Mammary epithelial cell (primary cell): ENCODE measurements at regions of chr14 and their contacts with region 1.

Region 1: GRCh38 chr14:23301288-23301968 is 1.2 kb downstream of the PPP1R3E start:
- DNase-seq: peak; percentile 99
- H3K4me3 ChIP-seq: peak overlapping the region; percentile 61 to 76 (median 73)
- H3K27ac ChIP-seq: peak overlapping the region; percentile 79
- H3K4me1 ChIP-seq: peaks cover 41% of the 10 kb centered on the region
- H3K27me3 ChIP-seq: no peaks in the 10 kb centered on the region
- CTCF ChIP-seq: peak; percentile 38 to 74

Region 2: DNA sequence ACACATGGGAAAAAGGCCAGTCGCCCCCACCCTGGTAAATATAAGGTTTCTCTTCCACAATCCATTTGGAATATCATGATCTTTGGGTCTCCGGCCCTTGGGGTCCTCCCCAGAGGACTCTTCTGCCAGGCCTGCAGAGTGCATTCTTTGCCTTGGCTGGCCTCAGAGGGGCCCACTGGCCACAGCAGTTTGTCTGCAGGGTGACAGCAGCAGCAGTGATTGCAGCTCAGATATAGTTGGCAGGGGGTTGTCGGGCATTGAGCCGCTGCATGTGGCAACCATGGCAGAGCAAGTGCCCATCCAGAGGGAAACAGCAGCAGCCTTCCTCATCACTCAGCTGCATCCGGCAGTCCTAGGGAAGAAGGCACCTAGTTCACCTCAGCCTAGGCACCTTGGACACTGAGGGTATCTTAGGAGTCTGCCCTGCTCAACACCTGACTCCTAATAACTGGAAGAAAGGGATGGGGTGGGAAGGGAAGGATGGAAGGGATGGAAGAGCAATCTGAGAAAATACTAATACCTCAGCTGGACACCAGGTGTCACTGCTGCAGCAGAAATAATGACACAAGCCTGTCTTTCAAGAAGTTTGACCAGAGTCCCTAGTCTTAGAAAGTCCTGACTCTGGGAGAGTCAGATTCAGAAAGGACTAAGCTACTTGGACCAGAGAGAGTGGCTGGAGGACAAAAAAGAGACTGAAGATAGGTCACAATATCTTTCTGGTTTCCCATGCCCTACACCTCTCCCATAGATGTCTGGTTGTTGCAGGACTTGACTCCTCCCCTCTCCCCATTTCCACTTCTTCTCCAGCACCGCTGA is 328.0 kb before region 1 on chr14:
- CTCF ChIA-PET with region 1: no interaction called
- dilution Hi-C with region 1: loop called (anchors 10 kb)
- in situ Hi-C with region 1: no loop called
- intact Hi-C with region 1: loop called (anchors 10 kb)
- DNase-seq: peak; percentile 57
- H3K4me3 ChIP-seq: no peak overlapping the region
- H3K27ac ChIP-seq: no peak overlapping the region
- H3K4me1 ChIP-seq: peaks cover 40% of the 10 kb centered on the region
- H3K27me3 ChIP-seq: no peaks in the 10 kb centered on the region
- CTCF ChIP-seq: peak; percentile 51 to 64

Region 3: GRCh38 chr14:23068476-23069412 is 232.7 kb before region 1 on chr14:
- CTCF ChIA-PET with region 1: no interaction called
- dilution Hi-C with region 1: no loop called
- in situ Hi-C with region 1: no loop called
- intact Hi-C with region 1: loop called (anchors 5 kb)
- DNase-seq: peak; percentile 83
- H3K4me3 ChIP-seq: no peak overlapping the region
- H3K27ac ChIP-seq: no peak overlapping the region
- H3K4me1 ChIP-seq: peaks cover 10% of the 10 kb centered on the region
- H3K27me3 ChIP-seq: no peaks in the 10 kb centered on the region
- CTCF ChIP-seq: peak; percentile 100

Region 4: DNA sequence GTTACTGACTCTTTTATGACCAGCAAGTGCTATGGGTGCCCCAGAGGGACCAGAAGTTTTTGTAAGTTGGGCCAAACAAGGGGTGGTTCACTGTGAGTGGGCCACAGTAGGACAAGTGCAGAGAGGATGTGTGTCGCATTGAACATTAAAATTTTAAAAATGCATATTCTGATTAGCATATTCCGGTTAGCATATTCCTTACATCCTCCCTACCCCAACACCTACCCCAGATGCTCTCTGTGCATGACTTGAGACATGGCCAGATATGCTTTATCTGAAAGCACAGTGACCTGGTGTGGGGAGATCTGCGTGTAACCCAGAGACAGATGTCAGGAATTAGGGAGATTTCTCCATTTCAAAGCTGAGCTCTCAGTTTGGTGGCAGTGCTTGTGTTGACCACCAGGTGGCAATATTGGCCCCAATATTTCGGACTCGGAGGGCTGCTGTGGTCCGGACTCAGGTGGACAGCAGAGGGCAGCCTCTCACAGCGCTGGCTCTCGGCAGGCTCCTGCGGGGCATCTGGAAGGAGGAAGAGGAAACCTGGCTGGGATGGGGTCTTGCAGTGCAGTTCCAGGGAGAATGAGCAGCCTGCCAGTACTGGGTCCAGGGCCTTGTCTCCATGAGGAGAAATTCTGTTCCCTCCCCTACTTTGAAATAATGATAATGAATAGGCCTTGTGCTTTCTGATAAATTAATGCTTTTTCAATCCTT is 180.7 kb before region 1 on chr14:
- CTCF ChIA-PET with region 1: interaction called, 31 read pairs
- dilution Hi-C with region 1: no loop called
- in situ Hi-C with region 1: no loop called
- intact Hi-C with region 1: loop called (anchors 1 kb)
- DNase-seq: peak; percentile 63
- H3K4me3 ChIP-seq: no peak overlapping the region
- H3K27ac ChIP-seq: no peak overlapping the region
- H3K4me1 ChIP-seq: peaks cover 4% of the 10 kb centered on the region
- H3K27me3 ChIP-seq: no peaks in the 10 kb centered on the region
- CTCF ChIP-seq: peak; percentile 100

Region 5: GRCh38 chr14:23181453-23181852 is 120.0 kb before region 1 on chr14:
- CTCF ChIA-PET with region 1: interaction called, 11 read pairs
- dilution Hi-C with region 1: no loop called
- in situ Hi-C with region 1: no loop called
- intact Hi-C with region 1: loop called (anchors 2 kb)
- DNase-seq: no peak
- H3K4me3 ChIP-seq: peak overlapping the region; percentile 51 to 57 (median 52)
- H3K27ac ChIP-seq: no peak overlapping the region
- H3K4me1 ChIP-seq: peaks cover 14% of the 10 kb centered on the region
- H3K27me3 ChIP-seq: no peaks in the 10 kb centered on the region
- CTCF ChIP-seq: no peak

Region 6: DNA sequence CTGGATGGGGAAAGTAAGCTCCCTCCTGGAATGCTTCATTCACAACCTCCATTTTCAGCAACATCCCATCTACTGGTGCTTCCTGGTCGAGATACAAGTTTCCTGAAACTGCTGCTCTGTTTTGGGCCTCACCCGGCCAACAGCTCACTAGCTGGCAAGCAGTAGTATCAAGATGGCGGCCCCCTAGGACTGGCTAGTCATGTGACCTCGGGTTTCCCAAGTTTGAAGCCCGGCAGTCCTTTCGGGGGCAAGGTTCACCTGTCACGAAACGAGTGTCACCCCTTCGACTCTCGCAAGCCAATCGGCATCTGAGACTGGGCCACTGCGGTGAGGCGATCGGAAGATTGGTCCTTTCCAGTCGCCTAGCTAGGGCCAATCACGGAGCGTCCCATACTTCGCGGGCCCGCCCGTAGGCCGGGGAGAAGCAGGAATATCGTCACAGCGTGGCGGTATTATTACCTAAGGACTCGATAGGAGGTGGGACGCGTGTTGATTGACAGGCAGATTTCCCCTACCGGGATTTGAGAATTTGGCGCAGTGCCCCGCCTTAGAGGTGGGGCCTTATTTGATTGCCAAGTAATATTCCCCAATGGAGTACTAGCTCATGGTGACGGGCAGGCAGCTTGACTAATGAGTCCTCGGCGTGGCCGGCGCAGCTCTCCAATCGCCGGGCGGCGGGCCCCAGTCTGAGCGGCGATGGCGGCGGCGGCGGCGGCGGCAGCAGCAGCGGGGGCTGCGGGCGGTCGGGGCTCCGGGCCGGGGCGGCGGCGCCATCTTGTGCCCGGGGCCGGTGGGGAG is 19.5 kb after region 1 on chr14 and contains the start of gene PABPN1:
- CTCF ChIA-PET with region 1: no interaction called
- dilution Hi-C with region 1: no loop called
- in situ Hi-C with region 1: no loop called
- intact Hi-C with region 1: loop called (anchors 1 kb)
- DNase-seq: peak; percentile 100
- H3K4me3 ChIP-seq: peak within 1 kb of the TSS; percentile 86 to 95 (median 91)
- H3K27ac ChIP-seq: peak within 1 kb of the TSS; percentile 92
- H3K4me1 ChIP-seq: peaks cover 19% of the 10 kb centered on the region
- H3K27me3 ChIP-seq: no peaks in the 10 kb centered on the region
- CTCF ChIP-seq: no peak
- total RNA-seq, gene PABPN1: 43.0 to 148 TPM

Region 7: DNA sequence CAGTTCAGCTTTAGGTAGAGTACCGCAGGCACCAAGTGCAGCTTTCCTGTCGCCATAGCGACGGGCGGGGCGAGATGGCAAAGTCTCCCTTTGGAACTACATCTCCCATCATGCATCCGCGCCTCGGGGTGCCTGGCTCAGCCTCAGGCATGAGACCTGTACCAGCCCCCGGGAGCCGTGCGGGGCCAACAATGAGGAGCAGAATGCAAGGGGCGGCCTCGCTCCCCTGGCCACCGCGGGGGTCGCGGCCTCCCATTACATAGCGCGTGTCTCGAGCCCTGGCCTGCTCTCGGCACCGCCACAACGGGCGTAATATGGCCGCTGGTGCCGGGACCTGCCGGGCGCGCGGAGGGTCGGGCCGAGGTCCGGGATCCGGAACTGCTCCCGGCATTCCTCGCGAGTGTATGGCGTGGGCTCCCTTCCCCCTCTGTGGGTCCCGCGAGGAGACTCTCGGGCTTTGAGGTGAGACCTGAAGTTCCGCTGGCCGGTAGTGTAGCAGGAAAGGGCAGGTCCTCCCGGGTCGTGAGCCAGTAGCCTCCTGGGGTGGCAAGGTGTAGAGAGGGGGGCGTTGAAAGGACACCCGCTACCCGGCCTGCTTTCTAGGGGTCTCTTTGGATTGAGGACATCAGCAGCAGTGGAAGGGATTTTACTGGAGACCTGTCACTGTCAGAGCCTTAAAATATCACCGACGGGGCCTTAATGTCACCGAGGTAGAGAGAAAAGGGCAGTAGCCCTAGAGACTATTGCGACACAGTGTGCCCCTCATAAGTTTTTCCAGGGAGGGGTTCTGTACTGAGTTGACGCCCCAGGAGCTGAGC is 254.7 kb after region 1 on chr14 and contains the start of gene THTPA:
- CTCF ChIA-PET with region 1: no interaction called
- dilution Hi-C with region 1: no loop called
- in situ Hi-C with region 1: loop called in 1 of 2 experiments (anchors 25 kb)
- intact Hi-C with region 1: no loop called
- DNase-seq: peak; percentile 84
- H3K4me3 ChIP-seq: peak within 1 kb of the TSS; percentile 67 to 95 (median 70)
- H3K27ac ChIP-seq: peak within 1 kb of the TSS; percentile 45
- H3K4me1 ChIP-seq: peaks cover 12% of the 10 kb centered on the region
- H3K27me3 ChIP-seq: no peaks in the 10 kb centered on the region
- CTCF ChIP-seq: no peak
- total RNA-seq, gene THTPA: 10.7 to 10.8 TPM